Activated B cell treated with CpG ODN at 0.5 μM for 24 hours (primary cell): ENCODE measurements at regions of chr10 and their contacts with region 1.

Region 1: GRCh38 chr10:68526626-68527307 is 556 bp downstream of the SLC25A16 start:
- DNase-seq: no peak
- ATAC-seq: no peak
- H3K4me3 Mint-ChIP-seq: peak overlapping the region; percentile 86
- H3K27ac Mint-ChIP-seq: peak overlapping the region; percentile 73
- H3K4me1 Mint-ChIP-seq: peaks cover 14% of the 10 kb centered on the region
- H3K27me3 Mint-ChIP-seq: no peaks in the 10 kb centered on the region
- CTCF ChIP-seq: no peak

Region 2: GRCh38 chr10:67884313-67884841 is 642.4 kb before region 1 on chr10 and contains the start of gene SIRT1:
- CTCF ChIA-PET with region 1: no interaction called
- POLR2A ChIA-PET with region 1: no interaction called
- intact Hi-C with region 1: loop called (anchors 1 kb)
- DNase-seq: peak; percentile 97
- ATAC-seq: peak; percentile 81
- H3K4me3 Mint-ChIP-seq: peak within 1 kb of the TSS; percentile 92
- H3K27ac Mint-ChIP-seq: peak within 1 kb of the TSS; percentile 96
- H3K4me1 Mint-ChIP-seq: peaks cover 31% of the 10 kb centered on the region
- H3K27me3 Mint-ChIP-seq: no peaks in the 10 kb centered on the region
- CTCF ChIP-seq: no peak
- total RNA-seq, gene SIRT1: 30.1 and 31.6 TPM in 2 replicates

Region 3: DNA sequence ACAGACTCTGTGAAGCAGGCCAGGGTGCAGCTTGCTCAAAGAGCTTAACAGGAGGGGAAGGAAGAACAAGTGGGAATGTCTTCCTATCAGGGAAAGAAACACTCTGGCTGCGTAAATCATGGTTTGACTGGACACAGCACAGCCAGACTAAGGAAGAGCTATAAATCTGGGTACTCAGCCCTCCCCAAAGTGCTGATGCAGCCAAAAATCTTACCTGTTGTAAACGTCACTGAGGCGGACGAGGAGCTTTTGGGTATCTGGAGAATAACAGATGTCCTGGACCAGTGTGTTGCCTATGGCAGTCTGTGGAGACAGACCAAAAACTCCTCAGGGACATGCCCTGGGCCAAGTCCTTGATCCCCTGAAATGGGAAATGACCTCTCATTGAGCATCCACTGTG is 238.1 kb before region 1 on chr10:
- CTCF ChIA-PET with region 1: no interaction called
- POLR2A ChIA-PET with region 1: no interaction called
- intact Hi-C with region 1: no loop called
- DNase-seq: no peak
- ATAC-seq: no peak
- H3K4me3 Mint-ChIP-seq: no peak overlapping the region
- H3K27ac Mint-ChIP-seq: no peak overlapping the region
- H3K4me1 Mint-ChIP-seq: no peaks in the 10 kb centered on the region
- H3K27me3 Mint-ChIP-seq: no peaks in the 10 kb centered on the region
- CTCF ChIP-seq: no peak

Region 4: GRCh38 chr10:68471586-68472408 is 55.0 kb before region 1 on chr10 and contains the start of gene DNA2:
- CTCF ChIA-PET with region 1: no interaction called
- POLR2A ChIA-PET with region 1: no interaction called
- intact Hi-C with region 1: loop called (anchors 1 kb)
- DNase-seq: peak; percentile 73
- ATAC-seq: peak; percentile 91
- H3K4me3 Mint-ChIP-seq: peak within 1 kb of the TSS; percentile 99
- H3K27ac Mint-ChIP-seq: peak within 1 kb of the TSS; percentile 88
- H3K4me1 Mint-ChIP-seq: peaks cover 18% of the 10 kb centered on the region
- H3K27me3 Mint-ChIP-seq: no peaks in the 10 kb centered on the region
- CTCF ChIP-seq: no peak
- total RNA-seq, gene DNA2: 6.6 and 8.1 TPM in 2 replicates

Region 5: GRCh38 chr10:68720793-68721672 is 194.3 kb after region 1 on chr10 and contains the start of gene CCAR1:
- CTCF ChIA-PET with region 1: no interaction called
- POLR2A ChIA-PET with region 1: interaction called, 3 read pairs
- intact Hi-C with region 1: loop called (anchors 1 kb)
- DNase-seq: peak; percentile 93
- ATAC-seq: peak; percentile 98
- H3K4me3 Mint-ChIP-seq: peak within 1 kb of the TSS; percentile 92
- H3K27ac Mint-ChIP-seq: peak within 1 kb of the TSS; percentile 98
- H3K4me1 Mint-ChIP-seq: peaks cover 14% of the 10 kb centered on the region
- H3K27me3 Mint-ChIP-seq: no peaks in the 10 kb centered on the region
- CTCF ChIP-seq: no peak
- total RNA-seq, gene CCAR1: 88.2 and 98.8 TPM in 2 replicates